ENCODE measurements at regions of chr10 and their contacts with region 1.

Region 1: DNA sequence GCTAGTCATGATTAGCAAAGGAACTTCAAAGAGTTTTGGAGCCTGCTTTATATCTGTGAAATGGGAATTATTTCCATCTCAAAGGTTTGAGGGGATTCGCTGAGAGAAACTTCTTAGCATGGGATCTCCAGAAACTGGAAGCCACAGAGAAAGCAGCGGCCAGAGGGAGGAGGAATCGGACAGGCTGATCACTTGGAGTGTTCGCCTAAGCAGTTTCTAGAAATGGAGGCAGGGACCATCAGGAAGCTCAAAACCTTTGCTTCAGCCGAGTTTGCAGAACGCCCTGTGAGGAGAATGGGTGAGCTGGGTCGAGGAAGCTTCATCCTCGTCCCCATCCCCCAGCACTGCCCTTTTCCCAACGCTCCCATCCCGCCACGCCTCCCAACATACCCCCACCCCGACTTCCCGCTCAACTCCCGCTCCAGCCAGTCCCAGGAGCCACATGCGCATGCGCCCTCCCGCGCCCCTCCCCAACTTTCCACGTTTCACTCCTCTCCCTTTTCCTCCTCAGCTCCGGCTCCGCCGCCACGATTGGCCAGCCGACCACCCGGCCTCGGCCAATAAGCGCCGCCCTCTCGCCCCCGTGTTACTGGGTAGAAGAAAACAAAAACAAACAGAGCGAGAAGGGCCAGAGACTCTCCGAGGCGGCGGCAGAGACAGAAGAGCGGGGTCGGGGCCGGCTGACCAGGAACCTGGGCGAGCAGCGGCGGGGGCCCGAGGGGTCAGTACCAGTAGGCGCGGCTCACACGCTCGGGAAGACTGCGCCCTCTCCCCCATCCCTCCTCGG is at the start of gene PDCD4:
- DNase-seq: peak; percentile 75 to 96 (median 90)
- ATAC-seq: peak; percentile 69 to 75 (median 72)
- H3K4me3 ChIP-seq: peak within 1 kb of the TSS; percentile 73 to 94
- H3K4me3 Mint-ChIP-seq: peak within 1 kb of the TSS; percentile 84 to 99 (median 97)
- H3K27ac ChIP-seq: peak within 1 kb of the TSS; percentile 96
- H3K27ac Mint-ChIP-seq: peak within 1 kb of the TSS; percentile 99
- H3K4me1 ChIP-seq: peaks cover 53 to 65% of the 10 kb centered on the region in 2 experiments
- H3K4me1 Mint-ChIP-seq: peaks cover 67 to 76% (median 68%) of the 10 kb centered on the region in 3 donors
- H3K27me3 ChIP-seq: no peaks in the 10 kb centered on the region
- H3K27me3 Mint-ChIP-seq: no peaks in the 10 kb centered on the region
- total RNA-seq, gene PDCD4: 239 to 335 (median 309) TPM

Region 2: DNA sequence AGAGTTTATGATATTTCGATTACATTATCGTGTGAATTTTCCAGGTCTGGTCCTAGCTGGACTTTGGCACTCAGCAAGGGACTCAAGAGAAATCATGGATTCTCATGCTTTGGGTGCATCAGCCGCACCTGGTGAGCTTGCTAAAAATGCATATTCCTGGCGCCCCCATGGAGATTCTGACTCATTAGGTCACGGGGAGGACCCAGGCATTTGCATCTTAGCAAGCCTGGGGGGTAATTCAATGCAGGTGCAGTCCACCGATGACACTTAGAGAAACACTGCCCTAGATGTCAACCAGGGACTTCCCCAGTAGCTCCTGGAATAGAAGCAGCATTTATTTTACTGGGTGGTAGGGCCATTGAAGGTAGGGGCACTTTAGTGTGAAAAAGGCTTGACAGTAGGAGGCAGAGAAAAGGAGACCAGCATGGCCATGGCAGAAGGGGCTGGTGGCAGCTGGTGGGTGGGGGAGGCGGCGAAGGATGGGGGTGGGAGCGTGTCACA is 29.7 kb before region 1 on chr10:
- CTCF ChIA-PET with region 1: interaction called, 5 to 10 read pairs
- POLR2A ChIA-PET with region 1: interaction called, 3 read pairs
- DNase-seq: no peak
- ATAC-seq: no peak
- H3K4me3 ChIP-seq: no peak overlapping the region
- H3K4me3 Mint-ChIP-seq: peak overlapping the region in 1 of 3 donors; percentile 46
- H3K27ac ChIP-seq: no peak overlapping the region
- H3K27ac Mint-ChIP-seq: peak overlapping the region in 1 of 2 donors; percentile 81
- H3K4me1 ChIP-seq: peaks cover 23 to 50% of the 10 kb centered on the region in 2 experiments
- H3K4me1 Mint-ChIP-seq: peaks cover 59 to 65% (median 63%) of the 10 kb centered on the region in 3 donors
- H3K27me3 ChIP-seq: no peaks in the 10 kb centered on the region
- H3K27me3 Mint-ChIP-seq: no peaks in the 10 kb centered on the region

Region 3: GRCh38 chr10:110857265-110858158 is 14.0 kb before region 1 on chr10:
- CTCF ChIA-PET with region 1: interaction called, 5 to 13 read pairs
- POLR2A ChIA-PET with region 1: interaction called, 8 to 20 read pairs
- DNase-seq: peak in 5 of 35 experiments; percentile 22 to 60 (median 40)
- ATAC-seq: peak; percentile 13 to 61 (median 37)
- H3K4me3 ChIP-seq: no peak overlapping the region
- H3K4me3 Mint-ChIP-seq: peak overlapping the region; percentile 6 to 72 (median 29)
- H3K27ac ChIP-seq: peak overlapping the region; percentile 96
- H3K27ac Mint-ChIP-seq: peak overlapping the region; percentile 96
- H3K4me1 ChIP-seq: peaks cover 67 to 74% of the 10 kb centered on the region in 2 experiments
- H3K4me1 Mint-ChIP-seq: peaks cover 87 to 92% (median 91%) of the 10 kb centered on the region in 3 donors
- H3K27me3 ChIP-seq: no peaks in the 10 kb centered on the region
- H3K27me3 Mint-ChIP-seq: no peaks in the 10 kb centered on the region

Region 4: DNA sequence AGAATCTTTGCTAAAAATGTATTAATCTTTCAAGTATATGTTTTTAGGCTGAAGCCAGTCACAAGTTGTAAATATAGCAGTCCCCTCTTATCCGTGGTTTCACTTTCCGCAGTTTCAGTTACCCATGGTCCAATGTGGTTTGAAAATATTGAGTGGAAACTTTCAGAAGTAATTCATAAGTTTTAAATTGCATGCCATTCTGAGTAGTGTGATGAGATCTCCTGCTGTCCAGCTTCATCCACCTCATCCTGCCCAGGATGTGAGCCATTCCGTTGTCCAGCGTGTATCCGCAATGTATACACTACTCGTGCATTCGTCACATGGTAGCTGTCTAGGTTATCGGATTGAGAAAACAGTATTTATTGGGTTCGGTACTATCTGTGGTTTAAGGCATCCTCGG is 12.4 kb after region 1 on chr10:
- CTCF ChIA-PET with region 1: interaction called, 5 read pairs
- POLR2A ChIA-PET with region 1: interaction called, 17 to 18 read pairs
- DNase-seq: no peak
- ATAC-seq: peak in 2 of 4 experiments; percentile 13 to 37
- H3K4me3 ChIP-seq: peak overlapping the region in 1 of 2 donors; percentile 8
- H3K4me3 Mint-ChIP-seq: peak overlapping the region; percentile 59 to 68 (median 63)
- H3K27ac ChIP-seq: peak overlapping the region; percentile 15
- H3K27ac Mint-ChIP-seq: peak overlapping the region; percentile 84 to 87
- H3K4me1 ChIP-seq: peaks cover 16 to 40% of the 10 kb centered on the region in 2 experiments
- H3K4me1 Mint-ChIP-seq: peaks cover 77 to 80% (median 80%) of the 10 kb centered on the region in 3 donors
- H3K27me3 ChIP-seq: no peaks in the 10 kb centered on the region
- H3K27me3 Mint-ChIP-seq: no peaks in the 10 kb centered on the region

Region 5: GRCh38 chr10:110918643-110919363 is 47.3 kb after region 1 on chr10 and contains the start of gene BBIP1:
- CTCF ChIA-PET with region 1: interaction called in 1 of 2 experiments, 5 read pairs
- POLR2A ChIA-PET with region 1: interaction called in 1 of 2 experiments, 16 read pairs
- DNase-seq: peak in 14 of 35 experiments; percentile 11 to 99 (median 97)
- ATAC-seq: peak; percentile 40 to 94 (median 93)
- H3K4me3 ChIP-seq: peak within 1 kb of the TSS; percentile 81
- H3K4me3 Mint-ChIP-seq: peak within 1 kb of the TSS; percentile 98 to 99 (median 99)
- H3K27ac ChIP-seq: peak within 1 kb of the TSS; percentile 97
- H3K27ac Mint-ChIP-seq: peak within 1 kb of the TSS; percentile 99 to 100
- H3K4me1 ChIP-seq: peaks cover 6 to 21% of the 10 kb centered on the region in 2 experiments
- H3K4me1 Mint-ChIP-seq: peaks cover 47 to 61% (median 59%) of the 10 kb centered on the region in 3 donors
- H3K27me3 ChIP-seq: no peaks in the 10 kb centered on the region
- H3K27me3 Mint-ChIP-seq: no peaks in the 10 kb centered on the region
- total RNA-seq, gene BBIP1: 28.6 to 36.6 (median 32.0) TPM